ENCODE measurements at regions of chr4 and their contacts with region 1.

Region 1: DNA sequence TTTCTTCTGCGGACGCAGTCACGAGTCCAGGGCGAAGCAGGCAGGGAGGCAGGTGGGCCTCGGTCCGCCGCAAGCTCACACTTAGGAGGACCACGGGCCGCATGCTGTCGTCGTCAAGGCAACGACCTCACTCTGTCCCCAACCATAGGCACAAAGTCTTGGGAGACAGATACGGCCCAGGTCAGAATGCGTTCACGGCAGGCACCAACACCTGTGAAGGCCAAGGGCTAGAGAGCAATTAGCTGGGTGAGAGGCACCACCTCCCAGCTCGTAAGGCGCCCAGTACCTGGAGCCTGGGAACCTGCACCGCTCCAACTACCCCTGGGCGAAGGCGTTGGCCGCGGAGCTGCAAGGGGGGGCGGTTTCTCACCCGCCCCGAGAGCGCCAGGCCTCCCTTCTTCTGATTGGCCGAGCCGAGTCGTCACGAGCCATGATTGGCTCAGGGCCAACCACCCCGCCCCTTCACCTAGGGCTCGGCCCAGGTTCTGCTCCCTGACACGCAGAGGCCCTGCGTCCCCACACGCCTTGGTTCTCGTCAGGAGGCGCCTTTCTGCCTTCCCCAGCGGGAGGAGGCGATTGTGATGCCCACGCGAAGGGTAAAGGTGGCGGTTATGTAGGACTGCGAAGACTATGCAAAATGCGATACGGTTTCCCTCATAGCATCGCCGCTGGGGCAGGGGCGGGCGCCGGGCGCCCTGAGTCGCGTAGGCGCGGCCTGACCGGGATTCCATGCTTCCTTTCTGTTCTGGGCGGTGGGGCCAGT is at the start of gene CDKL2:
- DNase-seq: peak; percentile 73 to 97 (median 86)

Region 2: DNA sequence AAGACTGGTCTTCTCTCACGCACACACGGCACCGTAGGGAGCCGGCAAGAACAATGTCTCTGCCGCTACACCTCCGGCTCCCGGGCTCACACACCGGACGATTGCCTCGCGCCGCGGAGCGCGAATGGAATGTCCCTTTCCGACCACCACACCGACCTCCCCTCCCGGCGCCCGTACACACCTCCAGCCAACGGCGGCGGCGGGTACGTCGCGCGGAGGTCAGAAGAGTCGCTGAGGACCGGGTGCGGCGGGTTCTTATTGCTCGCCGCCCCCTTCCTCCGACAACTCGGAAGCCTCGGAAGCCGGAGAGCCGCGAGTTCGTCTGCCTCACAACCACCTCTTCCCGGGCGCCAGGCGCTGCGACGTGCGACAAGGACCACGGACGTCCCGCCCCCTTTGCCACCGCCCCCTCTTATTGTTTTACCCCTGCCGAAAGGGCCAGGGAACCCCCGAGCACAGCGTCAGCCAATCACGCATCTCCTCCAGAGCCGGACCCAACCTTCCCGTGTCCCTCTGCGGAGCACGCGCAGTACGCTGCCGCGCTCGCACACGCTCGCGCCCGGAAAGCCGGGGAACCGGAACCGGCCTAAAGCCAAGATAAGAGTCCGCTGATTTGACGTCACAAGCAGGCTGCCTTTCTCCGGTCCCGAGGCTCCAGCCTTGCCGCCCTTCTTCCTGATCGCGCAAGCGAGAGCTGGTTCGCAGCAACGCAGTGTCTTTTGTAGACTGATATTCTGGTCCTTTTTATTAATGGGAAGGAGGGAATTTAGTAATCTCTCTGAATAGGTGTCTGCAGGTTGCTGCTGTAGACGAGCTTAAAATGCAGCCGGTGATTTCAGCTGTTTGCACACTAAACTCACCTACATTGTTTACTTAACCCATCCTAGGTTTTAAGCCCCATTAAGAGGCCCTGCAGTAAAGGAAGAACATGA is 42.9 kb after region 1 on chr4 and contains the start of gene G3BP2:
- intact Hi-C with region 1: loop called (anchors 2 kb)
- DNase-seq: peak; percentile 93 to 99 (median 97)

Measured in posterior cingulate gyrus (tissue), 11 donors.